ENCODE measurements at regions of chr3 and their contacts with region 1.

Region 1: DNA sequence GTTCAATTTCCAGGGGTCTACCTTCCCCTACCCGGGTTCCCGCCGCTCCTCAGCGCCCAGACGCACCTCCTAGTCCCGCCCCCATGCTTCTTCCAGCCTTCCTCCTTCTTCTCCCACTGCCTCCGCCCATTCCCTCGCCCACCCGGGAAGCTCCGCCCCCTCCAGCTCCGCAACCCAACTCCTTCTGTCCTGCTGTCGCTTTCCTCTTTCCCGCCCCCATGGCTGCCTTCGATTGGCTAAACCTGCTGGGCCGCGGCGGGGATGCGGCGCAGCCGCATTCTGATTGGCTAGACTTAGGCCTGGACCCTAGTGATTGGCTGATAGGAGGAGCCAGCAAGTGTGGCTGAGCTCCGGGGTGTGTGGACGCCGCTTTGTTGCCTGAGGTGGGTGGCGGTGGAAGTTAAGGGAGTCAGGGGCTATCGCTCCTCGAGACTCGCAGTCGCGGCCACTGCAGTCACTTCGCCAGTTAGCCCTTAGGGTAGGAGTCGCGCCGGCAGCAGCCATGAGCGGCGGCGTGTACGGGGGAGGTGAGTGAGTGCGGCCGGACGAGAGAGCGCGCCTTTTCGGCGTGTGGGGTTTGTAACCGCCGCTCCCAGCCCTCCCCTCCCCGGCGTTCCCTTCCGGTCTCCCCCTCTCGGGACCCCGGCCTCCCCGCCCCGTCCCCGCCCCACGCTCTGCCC is at the start of gene ACTL6A:
- DNase-seq: peak; percentile 96
- H3K4me3 ChIP-seq: peak within 1 kb of the TSS; percentile 84 to 98 (median 94)
- H3K27ac ChIP-seq: peak within 1 kb of the TSS; percentile 90 to 96 (median 94)
- H3K4me1 ChIP-seq: peaks cover 8 to 25% (median 10%) of the 10 kb centered on the region in 3 donors
- H3K27me3 ChIP-seq: no peaks in the 10 kb centered on the region
- CTCF ChIP-seq: no peak
- POLR2A ChIP-seq: peak in 3 of 4 donors; percentile 36 to 71 (median 49)
- total RNA-seq, gene ACTL6A: 51.5 to 95.4 (median 63.5) TPM

Region 2: DNA sequence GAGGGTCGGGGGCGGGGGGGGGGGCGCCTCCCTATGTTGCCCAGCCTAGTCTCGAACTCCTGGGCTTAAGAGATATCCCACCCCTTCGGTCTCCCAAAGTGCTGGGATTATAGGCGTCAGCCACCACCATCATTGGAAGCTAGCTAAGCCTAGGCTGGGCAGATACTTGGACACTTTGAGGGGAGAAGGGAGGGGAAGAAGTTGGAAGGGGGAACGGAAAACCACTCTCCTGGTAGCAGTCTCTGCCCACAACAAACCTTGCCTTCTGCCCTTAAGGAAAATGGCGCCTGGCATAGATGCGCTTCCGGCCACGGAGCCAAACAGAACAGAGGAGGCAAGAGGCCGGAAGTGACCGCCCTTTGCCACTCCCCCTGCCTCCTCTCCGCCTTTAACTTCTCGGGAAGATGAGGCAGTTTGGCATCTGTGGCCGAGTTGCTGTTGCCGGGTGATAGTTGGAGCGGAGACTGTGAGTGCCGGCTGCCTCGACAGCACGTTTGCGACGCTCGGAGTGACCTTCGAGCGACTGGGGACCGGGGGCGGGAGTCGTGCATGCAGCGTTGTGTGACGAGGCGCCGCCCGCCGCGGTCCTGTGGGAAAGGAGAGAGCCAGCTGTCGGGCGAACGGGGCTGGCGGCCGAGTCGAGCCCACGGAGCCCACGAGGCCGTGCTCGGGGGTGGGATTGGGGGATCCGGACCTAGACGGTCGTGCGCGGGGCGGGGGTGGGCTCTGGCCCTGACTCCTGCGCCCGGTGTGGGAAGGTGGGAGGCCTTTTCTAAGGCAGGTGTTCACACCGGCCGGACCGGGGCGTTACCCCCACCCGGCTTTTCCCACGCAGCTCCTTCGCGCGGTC is 215.2 kb before region 1 on chr3 and contains the start of gene MFN1:
- intact Hi-C with region 1: loop called (anchors 10 kb)
- DNase-seq: peak; percentile 69
- H3K4me3 ChIP-seq: peak within 1 kb of the TSS; percentile 85 to 94 (median 94)
- H3K27ac ChIP-seq: peak within 1 kb of the TSS; percentile 92 to 93 (median 92)
- H3K4me1 ChIP-seq: peaks cover 6 to 34% (median 12%) of the 10 kb centered on the region in 3 donors
- H3K27me3 ChIP-seq: no peaks in the 10 kb centered on the region
- CTCF ChIP-seq: peak in 1 of 6 experiments; percentile 2
- POLR2A ChIP-seq: peak in 2 of 4 donors; percentile 49 to 76
- total RNA-seq, gene MFN1: 25.2 to 55.3 (median 38.2) TPM

Region 3: GRCh38 chr3:179421500-179421899 is 141.2 kb before region 1 on chr3:
- intact Hi-C with region 1: loop called (anchors 10 kb)
- DNase-seq: no peak
- H3K4me3 ChIP-seq: no peak overlapping the region
- H3K27ac ChIP-seq: no peak overlapping the region
- H3K4me1 ChIP-seq: peaks cover 0 to 7% (median 0%) of the 10 kb centered on the region in 3 donors
- H3K27me3 ChIP-seq: no peaks in the 10 kb centered on the region
- CTCF ChIP-seq: peak in 3 of 6 experiments; percentile 31 to 44 (median 32)
- POLR2A ChIP-seq: no peak

Region 4: DNA sequence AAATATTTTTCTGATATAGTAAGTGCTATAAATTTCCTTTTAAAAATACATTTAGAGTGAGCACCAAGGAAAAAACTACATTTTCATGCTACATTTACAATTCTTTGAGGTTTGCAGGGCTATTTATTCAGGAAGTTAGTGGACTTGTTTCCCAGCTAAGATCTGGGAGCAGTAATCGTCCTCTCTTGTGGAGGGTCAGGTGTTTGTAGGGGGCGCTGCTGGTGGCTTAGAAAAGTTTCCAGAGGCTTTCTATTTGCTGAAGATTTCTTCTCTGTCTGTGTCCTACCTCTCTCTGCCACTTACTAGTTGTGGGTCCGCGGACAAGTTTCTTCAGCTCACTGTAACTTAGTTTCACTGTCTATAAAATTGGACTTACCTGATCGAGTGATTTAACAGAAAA is 310.1 kb after region 1 on chr3:
- intact Hi-C with region 1: no loop called
- DNase-seq: no peak
- H3K4me3 ChIP-seq: no peak overlapping the region
- H3K27ac ChIP-seq: no peak overlapping the region
- H3K4me1 ChIP-seq: no peaks in the 10 kb centered on the region
- H3K27me3 ChIP-seq: no peaks in the 10 kb centered on the region
- CTCF ChIP-seq: no peak
- POLR2A ChIP-seq: no peak

Measured in esophagus squamous epithelium (tissue), 5 donors.